Heart left ventricle (tissue), 16 donors: ENCODE measurements at regions of chr6 and their contacts with region 1.

Region 1: DNA sequence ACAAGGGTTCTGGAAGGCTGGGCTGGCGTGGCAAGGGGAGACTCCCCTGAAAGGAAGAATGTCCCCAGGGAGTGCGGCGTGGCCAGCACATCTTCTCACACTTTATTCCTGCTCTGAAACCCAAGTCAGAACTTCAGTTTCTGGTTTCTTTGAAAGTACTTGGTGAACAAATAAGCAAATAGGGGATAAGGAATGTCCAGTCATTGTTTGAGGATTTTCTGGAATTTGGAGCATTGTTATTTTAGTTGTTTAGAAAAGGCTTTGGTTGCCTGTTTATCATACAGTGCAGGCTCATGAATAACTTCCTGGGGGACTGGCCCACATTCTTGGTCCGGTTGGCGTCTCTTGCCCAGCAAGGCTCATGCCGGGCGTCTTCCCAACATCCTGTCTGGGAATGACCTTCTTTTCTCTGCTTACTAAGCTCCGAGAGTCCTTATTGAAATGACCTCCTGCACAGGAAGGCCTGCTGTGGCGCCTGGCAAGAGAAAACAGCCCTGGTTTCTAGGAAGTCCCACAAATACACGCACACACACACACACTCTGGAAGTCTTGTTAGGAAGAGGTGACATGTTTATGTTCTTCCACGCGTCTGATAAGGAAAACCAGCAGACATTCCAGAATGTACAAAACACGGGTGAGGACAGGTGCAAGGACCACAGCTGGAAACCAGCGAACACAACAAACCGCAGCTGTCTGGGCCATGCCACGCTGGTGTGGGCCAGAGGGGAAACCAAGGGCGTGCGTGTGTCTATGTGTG is 71.9 kb downstream of the TMEM170B start:
- DNase-seq: peak; percentile 40 to 75 (median 59)
- ATAC-seq: peak; percentile 26 to 81 (median 76)
- H3K4me3 ChIP-seq: no peak overlapping the region
- H3K27ac ChIP-seq: peak overlapping the region in 10 of 12 donors; percentile 8 to 74 (median 48)
- H3K4me1 ChIP-seq: peaks cover 0 to 51% (median 37%) of the 10 kb centered on the region in 12 donors
- H3K27me3 ChIP-seq: no peaks in the 10 kb centered on the region
- CTCF ChIP-seq: no peak
- POLR2A ChIP-seq: no peak

Region 2: GRCh38 chr6:12595161-12595811 is 985.8 kb after region 1 on chr6:
- intact Hi-C with region 1: loop called in 1 of 10 experiments (anchors 10 kb)
- DNase-seq: no peak
- ATAC-seq: peak in 1 of 4 donors; percentile 61
- H3K4me3 ChIP-seq: peak overlapping the region in 1 of 12 donors; percentile 4
- H3K27ac ChIP-seq: peak overlapping the region in 1 of 12 donors; percentile 45
- H3K4me1 ChIP-seq: peaks cover 0 to 26% (median 0%) of the 10 kb centered on the region in 12 donors
- H3K27me3 ChIP-seq: no peaks in the 10 kb centered on the region
- CTCF ChIP-seq: no peak
- POLR2A ChIP-seq: no peak